ENCODE measurements at regions of chr5 and their contacts with region 1.

Region 1: GRCh38 chr5:149381987-149382340 is 2.9 kb upstream of the IL17B start:
- DNase-seq: no peak
- ATAC-seq: peak; percentile 93
- H3K4me3 ChIP-seq: no peak overlapping the region
- H3K27ac ChIP-seq: no peak overlapping the region
- H3K4me1 ChIP-seq: 0 out of 2 replicates have a peak, but pooled peaks cover 3% of the 10 kb centered on the region
- H3K27me3 ChIP-seq: no peaks in the 10 kb centered on the region
- CTCF ChIP-seq: peak; percentile 97

Region 2: DNA sequence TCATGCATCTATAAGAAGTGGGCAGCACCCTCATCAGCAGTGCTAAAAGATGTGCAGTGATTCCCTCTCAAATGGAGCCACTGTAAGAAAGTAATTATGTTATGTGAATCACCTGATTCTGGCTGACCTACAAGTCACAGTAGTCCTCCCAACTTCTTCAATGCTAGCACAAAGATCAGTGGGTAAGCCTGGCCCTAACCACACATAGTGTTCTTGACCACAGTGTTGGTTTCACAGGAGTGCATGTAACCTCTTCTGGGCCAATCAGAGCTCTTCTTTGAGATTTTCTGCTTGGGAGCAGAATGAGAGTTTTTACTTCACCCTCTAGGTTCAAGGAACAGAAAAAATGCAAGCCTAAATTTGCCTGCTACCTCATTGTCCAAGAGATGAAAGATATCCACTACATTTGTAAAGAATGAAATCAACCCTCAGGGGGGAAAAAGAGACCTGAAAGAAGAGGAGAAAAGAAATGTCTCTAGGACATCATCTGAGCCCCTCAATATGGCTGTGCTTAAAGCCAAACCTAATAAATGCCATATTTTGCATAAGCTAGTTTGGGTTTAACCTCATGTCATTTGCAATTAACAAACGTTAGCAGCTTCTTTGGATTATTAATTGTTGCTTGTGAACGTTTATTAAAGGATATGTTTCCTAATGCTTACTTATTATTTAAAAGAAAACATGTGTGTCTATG is 620.9 kb before region 1 on chr5:
- CTCF ChIA-PET with region 1: no interaction called
- POLR2A ChIA-PET with region 1: no interaction called
- in situ Hi-C with region 1: no loop called
- intact Hi-C with region 1: no loop called
- DNase-seq: no peak
- ATAC-seq: no peak
- H3K4me3 ChIP-seq: no peak overlapping the region
- H3K27ac ChIP-seq: no peak overlapping the region
- H3K4me1 ChIP-seq: no peaks in the 10 kb centered on the region
- H3K27me3 ChIP-seq: no peaks in the 10 kb centered on the region
- CTCF ChIP-seq: no peak

Region 3: GRCh38 chr5:149228618-149229297 is 153.2 kb before region 1 on chr5:
- CTCF ChIA-PET with region 1: no interaction called
- POLR2A ChIA-PET with region 1: no interaction called
- in situ Hi-C with region 1: no loop called
- intact Hi-C with region 1: no loop called
- DNase-seq: peak; percentile 38
- ATAC-seq: peak; percentile 90
- H3K4me3 ChIP-seq: no peak overlapping the region
- H3K27ac ChIP-seq: no peak overlapping the region
- H3K4me1 ChIP-seq: no peaks in the 10 kb centered on the region
- H3K27me3 ChIP-seq: no peaks in the 10 kb centered on the region
- CTCF ChIP-seq: peak; percentile 78

Region 4: DNA sequence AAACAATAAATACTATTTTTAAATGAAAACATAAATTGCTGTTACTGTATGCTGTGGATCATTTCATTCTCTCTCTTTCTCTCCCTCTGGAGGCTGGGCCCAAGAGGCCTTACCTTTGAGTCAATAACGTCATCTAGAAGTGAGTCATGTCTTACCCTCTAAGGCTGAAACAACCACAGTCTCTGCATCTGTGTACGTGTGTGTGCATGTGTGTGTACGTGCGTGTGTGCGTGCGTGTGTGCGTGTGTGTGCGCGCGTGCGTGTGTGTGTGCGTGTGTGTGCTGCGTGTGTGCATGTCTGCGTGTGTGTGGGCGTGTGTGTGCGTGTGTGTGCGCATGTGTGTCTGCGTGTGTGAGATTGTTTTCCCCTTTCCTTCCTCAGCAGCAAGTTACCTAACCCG is 10.8 kb after region 1 on chr5:
- CTCF ChIA-PET with region 1: interaction called, 13 read pairs
- POLR2A ChIA-PET with region 1: no interaction called
- in situ Hi-C with region 1: no loop called
- intact Hi-C with region 1: no loop called
- DNase-seq: no peak
- ATAC-seq: peak; percentile 63; the same call in 1 of the 2 replicates
- H3K4me3 ChIP-seq: no peak overlapping the region
- H3K27ac ChIP-seq: no peak overlapping the region
- H3K4me1 ChIP-seq: no peaks in the 10 kb centered on the region
- H3K27me3 ChIP-seq: no peaks in the 10 kb centered on the region
- CTCF ChIP-seq: no peak

Region 5: GRCh38 chr5:149434162-149435014 is 52.4 kb after region 1 on chr5:
- CTCF ChIA-PET with region 1: interaction called, 6 read pairs
- POLR2A ChIA-PET with region 1: no interaction called
- in situ Hi-C with region 1: no loop called
- intact Hi-C with region 1: loop called (anchors 1 kb)
- DNase-seq: peak; percentile 50
- ATAC-seq: peak; percentile 68
- H3K4me3 ChIP-seq: no peak overlapping the region
- H3K27ac ChIP-seq: no peak overlapping the region
- H3K4me1 ChIP-seq: peaks cover 4% of the 10 kb centered on the region; the same call in 1 of the 2 replicates
- H3K27me3 ChIP-seq: no peaks in the 10 kb centered on the region
- CTCF ChIP-seq: peak; percentile 97

Measured in Panc1 (cell line).